Naive thymus-derived CD4-positive, alpha-beta T cell (primary cell): ENCODE measurements at regions of chr11 and their contacts with region 1.

Region 1: GRCh38 chr11:88016392-88017170 is 158.7 kb downstream of the RAB38 start:
- DNase-seq: peak in 8 of 9 donors; percentile 26 to 61 (median 52)
- ATAC-seq: peak; percentile 71
- H3K4me3 ChIP-seq: no peak overlapping the region
- H3K4me3 Mint-ChIP-seq: no peak overlapping the region
- H3K27ac ChIP-seq: no peak overlapping the region
- H3K27ac Mint-ChIP-seq: no peak overlapping the region
- H3K4me1 ChIP-seq: no peaks in the 10 kb centered on the region
- H3K4me1 Mint-ChIP-seq: no peaks in the 10 kb centered on the region
- H3K27me3 ChIP-seq: no peaks in the 10 kb centered on the region
- H3K27me3 Mint-ChIP-seq: peaks cover 0 to 7% (median 2%) of the 10 kb centered on the region in 5 donors

Region 2: DNA sequence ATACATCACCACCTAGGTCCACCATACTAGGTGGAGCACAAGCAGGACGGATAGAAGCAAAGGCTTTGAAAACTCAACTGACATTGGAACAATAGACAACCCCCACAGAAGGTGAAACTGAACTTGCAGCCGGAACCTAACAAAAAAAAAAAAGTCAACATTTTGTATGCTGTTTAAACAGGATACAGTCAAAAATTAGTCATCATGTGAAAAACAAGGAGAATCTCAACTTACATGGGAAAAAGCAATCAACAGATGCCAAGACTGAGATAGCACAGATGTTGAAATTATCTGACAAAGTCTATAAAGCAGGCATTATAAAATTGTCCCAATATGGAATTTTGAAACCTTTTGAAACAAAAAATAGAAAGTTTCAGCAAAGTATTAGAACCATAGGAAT is 34.8 kb after region 1 on chr11:
- CTCF ChIA-PET with region 1: no interaction called
- POLR2A ChIA-PET with region 1: no interaction called
- intact Hi-C with region 1: no loop called
- DNase-seq: no peak
- ATAC-seq: no peak
- H3K4me3 ChIP-seq: no peak overlapping the region
- H3K4me3 Mint-ChIP-seq: no peak overlapping the region
- H3K27ac ChIP-seq: no peak overlapping the region
- H3K27ac Mint-ChIP-seq: no peak overlapping the region
- H3K4me1 ChIP-seq: no peaks in the 10 kb centered on the region
- H3K4me1 Mint-ChIP-seq: no peaks in the 10 kb centered on the region
- H3K27me3 ChIP-seq: no peaks in the 10 kb centered on the region
- H3K27me3 Mint-ChIP-seq: peaks cover 0 to 6% (median 0%) of the 10 kb centered on the region in 5 donors

Region 3: DNA sequence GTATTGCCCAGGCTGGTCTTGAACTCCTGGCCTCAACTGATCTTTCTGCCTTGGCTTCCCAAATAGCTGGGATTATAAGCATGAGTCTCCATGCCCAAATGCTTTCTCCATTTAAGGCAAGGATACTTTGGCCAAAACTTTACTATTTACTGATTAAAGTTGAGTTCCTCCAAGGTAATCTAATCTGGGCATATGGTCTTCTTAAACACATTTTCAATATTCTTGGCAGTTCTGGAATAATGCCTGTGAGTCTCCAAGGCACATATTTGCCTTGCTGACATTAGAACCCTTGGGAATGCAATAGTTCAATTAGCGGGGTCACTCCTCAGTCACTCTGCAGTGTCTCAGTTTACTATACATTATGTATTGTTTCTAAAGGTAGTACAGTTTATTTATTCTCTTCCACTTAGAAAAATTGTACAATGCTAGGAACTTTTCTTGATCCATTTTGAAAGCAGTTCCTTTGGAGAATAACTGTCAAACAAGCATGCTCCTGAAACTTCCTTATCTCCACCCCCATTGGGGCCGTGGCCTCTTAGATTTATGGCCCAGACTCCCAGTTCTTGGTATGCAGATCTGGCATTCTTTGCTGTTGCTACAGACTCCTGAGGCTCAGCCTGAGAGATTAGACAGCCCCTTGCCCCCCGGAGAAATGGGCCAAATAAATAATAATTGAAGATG is 171.8 kb after region 1 on chr11:
- CTCF ChIA-PET with region 1: no interaction called
- POLR2A ChIA-PET with region 1: no interaction called
- intact Hi-C with region 1: no loop called
- DNase-seq: no peak
- ATAC-seq: no peak
- H3K4me3 ChIP-seq: no peak overlapping the region
- H3K4me3 Mint-ChIP-seq: no peak overlapping the region
- H3K27ac ChIP-seq: no peak overlapping the region
- H3K27ac Mint-ChIP-seq: no peak overlapping the region
- H3K4me1 ChIP-seq: no peaks in the 10 kb centered on the region
- H3K4me1 Mint-ChIP-seq: no peaks in the 10 kb centered on the region
- H3K27me3 ChIP-seq: no peaks in the 10 kb centered on the region
- H3K27me3 Mint-ChIP-seq: peaks cover 0 to 24% (median 13%) of the 10 kb centered on the region in 5 donors

Region 4: DNA sequence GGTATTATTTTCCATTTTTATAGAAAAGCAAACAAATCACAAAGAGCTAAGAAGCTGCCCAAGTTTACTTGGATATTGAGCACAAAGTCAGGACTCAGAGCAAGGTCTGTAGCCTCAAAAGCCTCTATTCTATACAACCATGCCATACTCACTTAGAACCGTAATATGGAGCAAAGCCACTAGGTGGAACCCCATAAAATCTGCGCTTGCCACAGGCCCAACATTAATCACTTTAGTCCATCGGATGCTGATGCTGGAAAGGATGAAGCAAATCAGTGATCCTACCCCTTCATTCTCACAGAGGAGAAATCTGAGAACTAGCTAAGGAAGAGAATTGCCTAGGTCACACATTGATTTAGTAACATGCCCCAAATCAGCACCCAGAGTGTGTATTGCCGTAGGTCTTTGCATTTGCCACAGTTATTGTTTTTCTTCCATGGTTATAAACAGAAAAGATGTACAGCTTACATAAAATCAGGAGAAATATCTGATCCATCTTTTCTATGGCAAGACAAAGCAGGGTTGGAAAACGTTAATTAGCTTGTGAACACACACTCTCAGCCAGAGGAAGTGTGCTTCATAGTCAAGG is 215.4 kb after region 1 on chr11:
- CTCF ChIA-PET with region 1: no interaction called
- POLR2A ChIA-PET with region 1: no interaction called
- intact Hi-C with region 1: loop called in 1 of 2 experiments (anchors 1 kb)
- DNase-seq: peak in 5 of 9 donors; percentile 1 to 50 (median 29)
- ATAC-seq: peak; percentile 65
- H3K4me3 ChIP-seq: no peak overlapping the region
- H3K4me3 Mint-ChIP-seq: no peak overlapping the region
- H3K27ac ChIP-seq: no peak overlapping the region
- H3K27ac Mint-ChIP-seq: no peak overlapping the region
- H3K4me1 ChIP-seq: no peaks in the 10 kb centered on the region
- H3K4me1 Mint-ChIP-seq: peaks cover 0 to 4% (median 0%) of the 10 kb centered on the region in 7 donors
- H3K27me3 ChIP-seq: no peaks in the 10 kb centered on the region
- H3K27me3 Mint-ChIP-seq: peaks cover 0 to 8% (median 0%) of the 10 kb centered on the region in 5 donors

Region 5: DNA sequence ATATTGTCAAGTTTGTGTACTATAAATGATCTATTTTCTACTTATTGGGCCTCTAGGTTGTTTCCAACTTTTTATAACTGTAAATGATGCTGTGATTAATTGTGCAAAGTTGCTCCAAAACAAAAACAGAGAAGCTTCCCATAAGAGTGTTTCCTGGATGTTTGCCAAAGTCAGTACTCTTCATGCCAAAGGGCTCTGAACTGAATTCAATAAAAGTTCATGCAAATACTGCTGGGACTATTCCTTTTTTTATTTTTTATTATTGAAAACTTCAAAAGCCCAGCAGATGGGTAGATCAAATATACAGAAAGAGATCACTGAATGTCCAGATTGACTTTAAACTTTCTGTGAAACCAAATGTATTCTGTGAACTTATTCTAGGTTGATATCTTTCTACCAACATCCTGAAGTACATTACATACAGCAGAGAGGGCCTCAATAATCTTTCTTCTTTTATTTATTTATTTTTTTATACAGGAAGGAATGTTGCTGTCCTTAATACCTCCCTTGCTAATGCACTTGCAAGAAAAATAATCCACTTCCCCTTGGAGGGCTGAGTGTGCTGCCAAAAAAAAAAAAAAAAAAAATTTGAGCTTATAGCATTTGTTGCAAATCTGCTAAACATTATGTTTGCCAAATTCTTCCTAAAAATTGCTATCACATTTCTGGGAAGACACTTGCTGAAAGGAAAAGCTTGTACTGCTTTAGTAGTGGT is 267.9 kb after region 1 on chr11:
- CTCF ChIA-PET with region 1: no interaction called
- POLR2A ChIA-PET with region 1: no interaction called
- intact Hi-C with region 1: no loop called
- DNase-seq: no peak
- ATAC-seq: no peak
- H3K4me3 ChIP-seq: no peak overlapping the region
- H3K4me3 Mint-ChIP-seq: no peak overlapping the region
- H3K27ac ChIP-seq: no peak overlapping the region
- H3K27ac Mint-ChIP-seq: no peak overlapping the region
- H3K4me1 ChIP-seq: no peaks in the 10 kb centered on the region
- H3K4me1 Mint-ChIP-seq: peaks cover 0 to 2% (median 0%) of the 10 kb centered on the region in 7 donors
- H3K27me3 ChIP-seq: no peaks in the 10 kb centered on the region
- H3K27me3 Mint-ChIP-seq: no peaks in the 10 kb centered on the region

Region 6: GRCh38 chr11:88535916-88536547 is 519.5 kb after region 1 on chr11:
- CTCF ChIA-PET with region 1: interaction called, 20 read pairs
- POLR2A ChIA-PET with region 1: no interaction called
- intact Hi-C with region 1: no loop called
- DNase-seq: no peak
- ATAC-seq: peak; percentile 46
- H3K4me3 ChIP-seq: no peak overlapping the region
- H3K4me3 Mint-ChIP-seq: no peak overlapping the region
- H3K27ac ChIP-seq: no peak overlapping the region
- H3K27ac Mint-ChIP-seq: no peak overlapping the region
- H3K4me1 ChIP-seq: no peaks in the 10 kb centered on the region
- H3K4me1 Mint-ChIP-seq: peaks cover 0 to 15% (median 0%) of the 10 kb centered on the region in 7 donors
- H3K27me3 ChIP-seq: no peaks in the 10 kb centered on the region
- H3K27me3 Mint-ChIP-seq: peaks cover 0 to 11% (median 1%) of the 10 kb centered on the region in 5 donors

Region 7: DNA sequence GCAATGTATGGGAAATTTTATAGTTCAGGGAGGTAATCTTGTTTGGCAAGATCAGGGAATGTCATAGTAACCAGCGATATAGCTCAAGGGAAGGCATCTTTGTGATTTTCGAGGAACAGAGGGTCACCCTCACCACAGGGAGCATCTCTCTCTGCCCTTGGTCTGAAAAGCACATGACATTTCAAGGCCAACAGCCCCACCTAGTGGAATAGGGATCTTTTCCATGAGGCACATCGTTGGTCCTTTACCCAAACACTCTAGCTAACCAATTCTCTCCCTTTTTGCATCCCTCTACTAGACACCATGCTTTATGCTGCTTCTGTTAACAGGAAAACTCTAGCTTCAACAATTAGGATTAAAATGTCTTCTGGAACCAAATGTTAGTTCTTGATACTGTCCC is 870.2 kb after region 1 on chr11:
- CTCF ChIA-PET with region 1: no interaction called
- POLR2A ChIA-PET with region 1: no interaction called
- intact Hi-C with region 1: loop called in 1 of 2 experiments (anchors 1 kb)
- DNase-seq: peak in 4 of 9 donors; percentile 11 to 34 (median 19)
- ATAC-seq: no peak
- H3K4me3 ChIP-seq: no peak overlapping the region
- H3K4me3 Mint-ChIP-seq: no peak overlapping the region
- H3K27ac ChIP-seq: no peak overlapping the region
- H3K27ac Mint-ChIP-seq: peak overlapping the region in 3 of 9 donors; percentile 9 to 19 (median 14)
- H3K4me1 ChIP-seq: no peaks in the 10 kb centered on the region
- H3K4me1 Mint-ChIP-seq: peaks cover 0 to 1% (median 0%) of the 10 kb centered on the region in 7 donors
- H3K27me3 ChIP-seq: no peaks in the 10 kb centered on the region
- H3K27me3 Mint-ChIP-seq: no peaks in the 10 kb centered on the region